CD14-positive monocyte (primary cell): ENCODE measurements at regions of chr11 and their contacts with region 1.

Region 1: GRCh38 chr11:64304316-64305072 is 830 bp upstream of the ESRRA start:
- DNase-seq: peak; percentile 90 to 93 (median 91)
- H3K4me3 ChIP-seq: peak overlapping the region; percentile 28 to 91 (median 70)
- H3K4me3 Mint-ChIP-seq: peak overlapping the region; percentile 79 to 89
- H3K27ac ChIP-seq: peak overlapping the region; percentile 96 to 97
- H3K27ac Mint-ChIP-seq: peak overlapping the region; percentile 96 to 99 (median 99)
- H3K4me1 ChIP-seq: peaks cover 46 to 54% of the 10 kb centered on the region in 2 donors
- H3K4me1 Mint-ChIP-seq: peaks cover 52% of the 10 kb centered on the region
- H3K27me3 ChIP-seq: peaks cover 11 to 15% of the 10 kb centered on the region in 2 donors
- H3K27me3 Mint-ChIP-seq: peaks cover 19 to 29% (median 27%) of the 10 kb centered on the region in 3 donors
- CTCF ChIP-seq: peak; percentile 95

Region 2: DNA sequence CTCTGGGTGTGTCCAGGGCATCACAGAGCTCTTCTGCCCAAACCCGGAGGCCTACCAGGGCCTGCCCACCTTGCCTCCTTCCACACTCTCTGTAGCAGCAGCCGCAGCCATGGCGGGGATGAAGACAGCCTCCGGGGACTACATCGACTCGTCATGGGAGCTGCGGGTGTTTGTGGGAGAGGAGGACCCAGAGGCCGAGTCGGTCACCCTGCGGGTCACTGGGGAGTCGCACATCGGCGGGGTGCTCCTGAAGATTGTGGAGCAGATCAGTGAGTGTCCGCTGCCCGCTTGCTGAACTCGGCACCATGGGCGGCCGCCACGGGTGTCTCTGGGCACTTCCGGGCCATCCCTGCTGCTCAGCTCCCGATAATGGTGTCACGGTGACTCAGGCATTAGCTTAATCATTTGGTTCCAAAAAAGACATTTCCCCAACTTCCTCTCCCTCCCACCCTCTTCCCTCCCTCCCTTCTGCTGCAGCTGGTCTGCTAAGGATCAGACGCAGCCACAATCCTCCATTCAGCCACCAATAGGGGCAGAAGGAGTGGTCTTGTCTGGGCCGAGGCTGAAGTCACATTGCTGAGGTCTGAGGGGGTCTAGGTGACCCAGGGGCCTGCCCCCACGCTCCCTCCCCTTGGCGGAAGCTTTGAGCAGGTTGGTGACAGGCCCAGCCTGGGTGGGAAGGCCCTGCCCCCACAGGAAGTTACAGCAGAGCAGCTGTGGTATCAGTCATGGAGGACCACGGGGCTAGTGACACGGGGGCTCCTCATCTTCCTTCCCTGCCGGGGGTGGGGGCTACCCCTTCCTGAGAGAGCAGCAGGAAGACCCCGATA is 97.0 kb before region 1 on chr11:
- intact Hi-C with region 1: loop called (anchors 1 to 2 kb)
- DNase-seq: peak; percentile 89 to 92 (median 92)
- H3K4me3 ChIP-seq: peak overlapping the region; percentile 62 to 100 (median 98)
- H3K4me3 Mint-ChIP-seq: peak overlapping the region; percentile 98
- H3K27ac ChIP-seq: peak overlapping the region; percentile 98 to 99
- H3K27ac Mint-ChIP-seq: peak overlapping the region; percentile 97 to 99 (median 98)
- H3K4me1 ChIP-seq: peaks cover 43 to 55% of the 10 kb centered on the region in 2 donors
- H3K4me1 Mint-ChIP-seq: peaks cover 48% of the 10 kb centered on the region
- H3K27me3 ChIP-seq: no peaks in the 10 kb centered on the region
- H3K27me3 Mint-ChIP-seq: no peaks in the 10 kb centered on the region
- CTCF ChIP-seq: no peak

Region 3: DNA sequence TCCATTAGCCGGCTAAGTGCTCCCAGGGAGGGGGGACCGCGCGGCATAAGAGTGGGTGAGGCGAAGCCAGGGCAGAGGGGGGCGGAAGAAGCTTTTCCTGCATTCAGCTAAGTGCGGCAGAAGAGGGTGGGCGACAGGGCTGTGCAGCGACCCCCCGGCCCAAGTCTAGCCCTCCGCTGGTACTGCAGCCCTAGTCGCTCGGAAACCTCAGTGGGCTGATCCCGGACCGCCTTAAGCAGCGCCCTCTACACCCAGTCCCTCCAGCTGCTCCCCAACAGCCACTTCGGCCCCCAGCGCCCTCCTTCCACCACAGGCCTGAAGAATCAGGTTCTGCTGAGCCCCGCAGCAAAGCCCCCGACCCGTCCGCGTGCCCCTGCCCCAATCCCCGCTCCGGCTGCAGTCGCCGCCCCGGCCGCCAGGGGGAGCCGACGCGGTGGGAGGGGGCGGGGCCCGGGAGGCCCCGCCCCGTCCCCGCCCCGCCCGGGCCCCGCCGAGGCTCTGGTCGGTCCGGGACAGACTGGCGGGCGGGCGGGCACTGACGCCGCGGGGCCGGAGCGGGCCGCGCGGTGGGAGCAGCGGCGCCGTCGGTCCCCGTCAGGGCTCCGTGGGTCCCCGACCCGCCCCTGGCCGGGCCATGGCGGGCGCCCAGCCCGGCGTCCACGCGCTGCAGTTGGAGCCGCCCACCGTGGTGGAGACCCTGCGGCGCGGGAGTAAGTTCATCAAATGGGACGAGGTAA is 53.3 kb before region 1 on chr11 and contains the start of gene PLCB3:
- intact Hi-C with region 1: loop called in 1 of 2 experiments (anchors 2 kb)
- DNase-seq: peak; percentile 22 to 64 (median 61)
- H3K4me3 ChIP-seq: peak within 1 kb of the TSS; percentile 75 to 87 (median 83)
- H3K4me3 Mint-ChIP-seq: peak within 1 kb of the TSS; percentile 89 to 96
- H3K27ac ChIP-seq: peak within 1 kb of the TSS in 1 of 2 donors; percentile 74
- H3K27ac Mint-ChIP-seq: peak within 1 kb of the TSS; percentile 73 to 90 (median 80)
- H3K4me1 ChIP-seq: peaks cover 38 to 55% of the 10 kb centered on the region in 2 donors
- H3K4me1 Mint-ChIP-seq: peaks cover 38% of the 10 kb centered on the region
- H3K27me3 ChIP-seq: no peaks in the 10 kb centered on the region
- H3K27me3 Mint-ChIP-seq: peaks cover 3 to 10% (median 8%) of the 10 kb centered on the region in 3 donors
- CTCF ChIP-seq: peak; percentile 83
- polyA plus RNA-seq, gene PLCB3: 1.1 to 17.8 (median 1.4) TPM

Region 4: GRCh38 chr11:64284048-64284961 is 20.2 kb before region 1 on chr11 and contains the start of gene BAD:
- intact Hi-C with region 1: loop called in 1 of 2 experiments (anchors 2 kb)
- DNase-seq: peak; percentile 91 to 93 (median 92)
- H3K4me3 ChIP-seq: peak within 1 kb of the TSS; percentile 74 to 98 (median 81)
- H3K4me3 Mint-ChIP-seq: peak within 1 kb of the TSS; percentile 86 to 90
- H3K27ac ChIP-seq: peak within 1 kb of the TSS; percentile 91 to 100
- H3K27ac Mint-ChIP-seq: peak within 1 kb of the TSS; percentile 92 to 98 (median 96)
- H3K4me1 ChIP-seq: peaks cover 20 to 24% of the 10 kb centered on the region in 2 donors
- H3K4me1 Mint-ChIP-seq: peaks cover 24% of the 10 kb centered on the region
- H3K27me3 ChIP-seq: no peaks in the 10 kb centered on the region
- H3K27me3 Mint-ChIP-seq: peaks cover under 1 to 10% (median 2%) of the 10 kb centered on the region in 3 donors
- CTCF ChIP-seq: no peak
- polyA plus RNA-seq, gene BAD: 21.1 to 63.2 (median 48.7) TPM

Region 5: DNA sequence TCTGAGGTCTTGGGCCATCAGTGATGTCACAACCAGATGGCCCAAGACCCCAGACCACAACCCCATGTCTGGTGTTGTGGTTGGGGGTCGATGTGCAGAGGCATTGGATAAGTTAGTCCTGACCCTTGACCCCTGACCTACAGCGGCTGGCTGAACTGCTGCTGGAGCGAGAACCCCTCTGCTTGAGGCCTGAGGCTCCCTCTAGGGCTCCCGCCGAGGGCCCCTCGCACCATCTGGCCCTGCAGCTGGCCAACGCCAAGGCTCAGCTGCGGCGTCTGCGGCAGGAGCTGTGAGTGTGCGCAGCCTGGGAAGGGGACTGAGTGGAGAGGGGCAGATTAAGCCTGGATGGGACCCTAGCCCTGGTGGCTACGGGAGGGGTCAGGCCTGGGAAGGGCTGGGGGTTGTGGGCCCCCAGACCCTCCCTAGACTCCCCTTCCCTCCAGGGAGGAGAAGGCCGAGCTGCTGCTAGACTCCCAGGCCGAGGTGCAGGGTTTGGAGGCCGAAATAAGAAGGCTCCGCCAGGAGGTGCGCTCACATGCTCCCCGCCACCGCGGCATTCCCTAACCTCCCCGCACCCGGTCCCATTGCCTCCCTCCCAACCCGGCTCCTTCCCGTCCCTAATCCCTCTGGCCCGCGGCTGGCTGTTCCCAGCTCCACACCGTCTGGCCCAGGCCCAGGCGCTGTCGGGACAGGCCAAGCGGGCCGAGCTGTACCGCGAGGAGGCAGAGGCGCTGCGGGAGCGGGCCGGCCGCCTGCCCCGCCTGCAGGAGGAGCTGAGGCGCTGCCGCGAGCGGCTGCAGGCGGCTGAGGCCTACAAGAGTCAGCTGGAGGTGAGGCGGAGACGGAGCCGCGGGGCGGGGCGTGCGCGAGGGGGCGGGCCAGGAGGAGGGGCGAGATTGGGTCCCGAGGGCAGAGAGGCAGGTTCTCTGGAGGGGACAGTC is 37.6 kb after region 1 on chr11:
- intact Hi-C with region 1: loop called in 1 of 2 experiments (anchors 5 kb)
- DNase-seq: peak; percentile 80 to 85 (median 84)
- H3K4me3 ChIP-seq: peak overlapping the region in 2 of 3 experiments; percentile 23 to 93
- H3K4me3 Mint-ChIP-seq: peak overlapping the region; percentile 57 to 82
- H3K27ac ChIP-seq: peak overlapping the region; percentile 20 to 61
- H3K27ac Mint-ChIP-seq: peak overlapping the region; percentile 54 to 96 (median 74)
- H3K4me1 ChIP-seq: peaks cover 35 to 51% of the 10 kb centered on the region in 2 donors
- H3K4me1 Mint-ChIP-seq: peaks cover 54% of the 10 kb centered on the region
- H3K27me3 ChIP-seq: no peaks in the 10 kb centered on the region
- H3K27me3 Mint-ChIP-seq: no peaks in the 10 kb centered on the region
- CTCF ChIP-seq: peak; percentile 48